ENCODE measurements at regions of chrX and their contacts with region 1.

Region 1: DNA sequence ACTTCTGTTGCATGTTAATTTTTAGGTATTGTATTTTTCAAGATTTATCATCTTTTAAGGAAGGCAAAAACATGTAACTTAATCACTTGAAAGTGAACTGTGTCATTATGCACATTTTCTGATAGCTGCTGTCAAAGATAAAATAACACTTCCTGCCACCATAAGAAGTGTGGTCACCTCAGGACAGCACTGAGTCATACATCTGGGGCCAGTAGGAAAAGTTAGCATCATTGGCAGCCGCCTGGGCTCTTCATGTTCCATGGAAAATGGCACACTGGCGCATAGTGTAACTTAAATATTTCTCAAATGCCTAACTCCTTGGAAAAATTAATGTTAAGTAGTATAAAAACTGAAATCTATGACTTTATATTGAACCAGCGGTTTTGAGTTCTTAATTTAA is 24.2 kb downstream of the CNKSR2 start:
- DNase-seq: no peak
- ATAC-seq: no peak
- H3K4me3 ChIP-seq: no peak overlapping the region
- H3K4me3 Mint-ChIP-seq: no peak overlapping the region
- H3K27ac ChIP-seq: no peak overlapping the region
- H3K27ac Mint-ChIP-seq: no peak overlapping the region
- H3K4me1 ChIP-seq: no peaks in the 10 kb centered on the region
- H3K4me1 Mint-ChIP-seq: peaks cover 0 to 43% (median 31%) of the 10 kb centered on the region in 7 donors
- H3K27me3 ChIP-seq: no peaks in the 10 kb centered on the region
- H3K27me3 Mint-ChIP-seq: no peaks in the 10 kb centered on the region

Region 2: DNA sequence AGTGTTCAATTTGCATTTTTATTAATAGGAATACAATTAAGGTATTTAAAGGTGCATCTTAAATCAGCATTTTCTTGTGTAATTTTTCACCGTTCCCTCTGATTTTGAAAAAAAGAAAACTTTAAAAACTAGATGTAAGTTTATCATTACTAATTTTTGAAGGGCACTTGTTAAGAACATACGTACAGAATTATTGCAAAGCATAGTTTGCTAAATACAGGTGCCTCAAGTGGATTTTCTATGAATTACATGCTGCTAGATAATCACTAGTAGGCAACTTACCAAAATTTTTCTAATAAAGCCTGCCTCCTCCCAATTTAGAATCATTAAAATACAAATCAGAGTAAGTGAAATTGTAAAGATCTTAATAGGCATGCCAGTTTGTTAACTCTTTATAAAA is 15.7 kb before region 1 on chrX:
- CTCF ChIA-PET with region 1: interaction called, 3 read pairs
- POLR2A ChIA-PET with region 1: no interaction called
- intact Hi-C with region 1: loop called in 1 of 2 experiments (anchors 2 kb)
- DNase-seq: peak in 4 of 9 donors; percentile 1 to 10 (median 8)
- ATAC-seq: no peak
- H3K4me3 ChIP-seq: no peak overlapping the region
- H3K4me3 Mint-ChIP-seq: peak overlapping the region in 3 of 10 donors; percentile 11 to 37 (median 19)
- H3K27ac ChIP-seq: no peak overlapping the region
- H3K27ac Mint-ChIP-seq: no peak overlapping the region
- H3K4me1 ChIP-seq: peaks cover 0 to 5% of the 10 kb centered on the region in 2 donors
- H3K4me1 Mint-ChIP-seq: peaks cover 8 to 60% (median 41%) of the 10 kb centered on the region in 7 donors
- H3K27me3 ChIP-seq: no peaks in the 10 kb centered on the region
- H3K27me3 Mint-ChIP-seq: no peaks in the 10 kb centered on the region

Region 3: DNA sequence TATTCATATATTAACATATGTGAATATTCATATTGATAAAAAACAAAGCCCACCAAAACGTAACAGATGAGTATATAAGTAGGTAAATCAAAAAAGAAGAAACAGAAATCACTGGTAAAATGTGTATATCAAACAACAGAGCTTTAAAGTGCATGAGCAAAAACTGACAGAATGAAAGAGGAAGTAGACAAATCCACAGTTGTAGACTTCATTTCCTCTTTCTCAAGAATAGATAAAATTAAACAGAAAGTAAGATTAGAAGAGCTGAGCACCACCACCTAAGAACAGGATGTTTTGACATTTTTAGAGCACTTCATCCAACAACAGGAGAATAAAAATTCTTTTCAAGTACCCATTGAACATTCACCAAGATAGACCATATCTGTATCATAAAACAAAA is 40.4 kb after region 1 on chrX:
- CTCF ChIA-PET with region 1: no interaction called
- POLR2A ChIA-PET with region 1: no interaction called
- intact Hi-C with region 1: loop called in 1 of 2 experiments (anchors 5 kb)
- DNase-seq: peak in 7 of 9 donors; percentile 7 to 58 (median 47)
- ATAC-seq: peak; percentile 86
- H3K4me3 ChIP-seq: no peak overlapping the region
- H3K4me3 Mint-ChIP-seq: peak overlapping the region; percentile 20 to 89 (median 82)
- H3K27ac ChIP-seq: peak overlapping the region; percentile 50
- H3K27ac Mint-ChIP-seq: peak overlapping the region; percentile 86 to 96 (median 92)
- H3K4me1 ChIP-seq: peaks cover 2 to 14% of the 10 kb centered on the region in 2 donors
- H3K4me1 Mint-ChIP-seq: peaks cover 4 to 61% (median 43%) of the 10 kb centered on the region in 7 donors
- H3K27me3 ChIP-seq: no peaks in the 10 kb centered on the region
- H3K27me3 Mint-ChIP-seq: no peaks in the 10 kb centered on the region

Measured in naive thymus-derived CD4-positive, alpha-beta T cell (primary cell).